ENCODE measurements at regions of chr15 and their contacts with region 1.

Region 1: DNA sequence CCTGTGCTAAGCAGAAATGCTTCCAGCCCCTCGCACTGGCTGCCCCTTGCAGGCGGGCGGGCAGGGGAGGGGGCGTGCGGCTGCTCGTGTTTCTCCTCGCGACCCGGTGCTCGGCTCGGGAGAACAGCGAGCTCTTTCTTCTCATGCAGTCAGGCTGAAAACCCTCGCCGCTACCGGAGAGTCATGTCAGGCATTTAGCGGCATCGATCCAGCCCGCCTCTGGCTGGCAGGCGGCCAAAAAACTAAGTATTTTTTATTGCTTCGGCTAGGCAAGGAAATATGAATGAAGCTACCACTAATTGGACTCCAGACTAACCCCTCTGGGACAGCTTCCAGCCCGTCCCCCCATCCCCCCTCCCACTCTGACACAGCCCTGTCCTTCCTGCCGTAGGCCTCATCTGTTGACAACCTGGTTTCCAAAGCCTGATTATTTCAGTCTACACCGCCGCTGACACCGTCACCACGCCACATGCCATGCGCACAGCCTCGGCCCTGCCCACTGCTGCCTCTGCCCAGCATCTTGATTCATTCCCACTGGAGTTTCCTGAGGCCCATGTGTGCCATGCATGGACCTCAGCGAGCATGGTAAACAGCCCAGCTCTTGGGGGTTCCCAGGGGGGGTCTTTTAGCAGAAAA is 35.3 kb downstream of the TLE3 start:
- DNase-seq: peak; percentile 91
- H3K4me3 Mint-ChIP-seq: peak overlapping the region; percentile 56
- H3K27ac Mint-ChIP-seq: peak overlapping the region; percentile 23
- H3K4me1 Mint-ChIP-seq: peaks cover 27% of the 10 kb centered on the region
- H3K27me3 Mint-ChIP-seq: no peaks in the 10 kb centered on the region
- CTCF ChIP-seq: no peak

Region 2: DNA sequence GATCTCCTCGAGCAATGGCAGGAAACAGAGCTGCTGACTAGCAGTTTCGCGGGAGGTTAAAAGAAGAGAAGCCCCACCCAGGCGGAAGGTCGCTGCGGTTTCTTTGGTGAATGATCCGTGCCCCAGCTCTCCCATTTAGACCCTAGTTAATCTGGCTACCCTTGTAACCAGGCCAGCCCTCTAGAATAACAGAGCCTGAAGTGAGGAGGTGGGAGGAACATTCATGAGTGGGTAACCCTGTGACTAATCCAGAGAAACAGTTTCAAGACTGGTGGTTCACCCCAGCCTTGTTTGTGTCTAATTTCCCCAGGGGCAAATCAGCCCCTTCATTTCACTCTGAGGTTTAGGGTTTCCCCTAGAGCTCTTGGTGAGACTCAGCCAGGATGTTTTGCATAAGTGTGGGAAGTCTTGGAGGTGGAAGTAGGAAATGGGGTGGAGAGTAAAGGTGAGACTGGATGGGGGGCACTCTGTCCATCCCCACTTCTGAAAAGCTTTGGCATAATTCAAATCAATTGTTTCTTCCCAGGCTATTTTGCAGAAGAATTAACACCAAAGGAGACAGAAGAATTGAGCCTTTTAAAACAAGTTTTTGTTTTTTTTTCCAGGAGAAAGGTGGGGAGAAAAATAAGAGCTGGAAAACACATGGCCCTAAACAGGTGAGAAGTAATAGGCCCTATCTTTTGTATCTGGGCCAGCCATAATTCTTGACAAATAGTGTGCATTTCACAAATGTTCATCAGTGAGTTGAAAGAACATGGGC is 306.7 kb before region 1 on chr15:
- CTCF ChIA-PET with region 1: no interaction called
- intact Hi-C with region 1: loop called (anchors 10 kb)
- DNase-seq: no peak
- H3K4me3 Mint-ChIP-seq: no peak overlapping the region
- H3K27ac Mint-ChIP-seq: peak overlapping the region; percentile 57
- H3K4me1 Mint-ChIP-seq: peaks cover 53% of the 10 kb centered on the region
- H3K27me3 Mint-ChIP-seq: no peaks in the 10 kb centered on the region
- CTCF ChIP-seq: no peak

Region 3: GRCh38 chr15:69834761-69835160 is 227.7 kb before region 1 on chr15:
- CTCF ChIA-PET with region 1: no interaction called
- intact Hi-C with region 1: no loop called
- DNase-seq: no peak
- H3K4me3 Mint-ChIP-seq: no peak overlapping the region
- H3K27ac Mint-ChIP-seq: no peak overlapping the region
- H3K4me1 Mint-ChIP-seq: peaks cover 9% of the 10 kb centered on the region
- H3K27me3 Mint-ChIP-seq: peaks cover 86% of the 10 kb centered on the region
- CTCF ChIP-seq: no peak

Region 4: GRCh38 chr15:70091726-70092463 is 29.5 kb after region 1 on chr15:
- CTCF ChIA-PET with region 1: interaction called, 7 read pairs
- intact Hi-C with region 1: loop called (anchors 2 kb)
- DNase-seq: peak; percentile 28
- H3K4me3 Mint-ChIP-seq: peak overlapping the region; percentile 97
- H3K27ac Mint-ChIP-seq: no peak overlapping the region
- H3K4me1 Mint-ChIP-seq: peaks cover 57% of the 10 kb centered on the region
- H3K27me3 Mint-ChIP-seq: no peaks in the 10 kb centered on the region
- CTCF ChIP-seq: no peak

Region 5: GRCh38 chr15:70210528-70210927 is 148.1 kb after region 1 on chr15:
- CTCF ChIA-PET with region 1: no interaction called
- intact Hi-C with region 1: no loop called
- DNase-seq: no peak
- H3K4me3 Mint-ChIP-seq: no peak overlapping the region
- H3K27ac Mint-ChIP-seq: no peak overlapping the region
- H3K4me1 Mint-ChIP-seq: no peaks in the 10 kb centered on the region
- H3K27me3 Mint-ChIP-seq: peaks cover 79% of the 10 kb centered on the region
- CTCF ChIP-seq: no peak